Aorta (tissue), 5 donors: ENCODE measurements at regions of chr2 and their contacts with region 1.

Region 1: GRCh38 chr2:192162392-192163042 is 32.2 kb downstream of the TMEFF2 start:
- DNase-seq: no peak
- ATAC-seq: peak; percentile 87
- H3K4me3 ChIP-seq: no peak overlapping the region
- H3K27ac ChIP-seq: no peak overlapping the region
- H3K4me1 ChIP-seq: no peaks in the 10 kb centered on the region
- H3K27me3 ChIP-seq: no peaks in the 10 kb centered on the region

Region 2: GRCh38 chr2:191555092-191555742 is 607.3 kb before region 1 on chr2:
- intact Hi-C with region 1: loop called (anchors 5 kb)
- DNase-seq: peak; percentile 85 to 90
- ATAC-seq: peak; percentile 88
- H3K4me3 ChIP-seq: no peak overlapping the region
- H3K27ac ChIP-seq: no peak overlapping the region
- H3K4me1 ChIP-seq: no peaks in the 10 kb centered on the region
- H3K27me3 ChIP-seq: no peaks in the 10 kb centered on the region

Region 3: GRCh38 chr2:192243488-192243887 is 81.0 kb after region 1 on chr2:
- intact Hi-C with region 1: no loop called
- DNase-seq: no peak
- ATAC-seq: no peak
- H3K4me3 ChIP-seq: no peak overlapping the region
- H3K27ac ChIP-seq: no peak overlapping the region
- H3K4me1 ChIP-seq: no peaks in the 10 kb centered on the region
- H3K27me3 ChIP-seq: no peaks in the 10 kb centered on the region